ENCODE measurements at regions of chr7 and their contacts with region 1.

Region 1: DNA sequence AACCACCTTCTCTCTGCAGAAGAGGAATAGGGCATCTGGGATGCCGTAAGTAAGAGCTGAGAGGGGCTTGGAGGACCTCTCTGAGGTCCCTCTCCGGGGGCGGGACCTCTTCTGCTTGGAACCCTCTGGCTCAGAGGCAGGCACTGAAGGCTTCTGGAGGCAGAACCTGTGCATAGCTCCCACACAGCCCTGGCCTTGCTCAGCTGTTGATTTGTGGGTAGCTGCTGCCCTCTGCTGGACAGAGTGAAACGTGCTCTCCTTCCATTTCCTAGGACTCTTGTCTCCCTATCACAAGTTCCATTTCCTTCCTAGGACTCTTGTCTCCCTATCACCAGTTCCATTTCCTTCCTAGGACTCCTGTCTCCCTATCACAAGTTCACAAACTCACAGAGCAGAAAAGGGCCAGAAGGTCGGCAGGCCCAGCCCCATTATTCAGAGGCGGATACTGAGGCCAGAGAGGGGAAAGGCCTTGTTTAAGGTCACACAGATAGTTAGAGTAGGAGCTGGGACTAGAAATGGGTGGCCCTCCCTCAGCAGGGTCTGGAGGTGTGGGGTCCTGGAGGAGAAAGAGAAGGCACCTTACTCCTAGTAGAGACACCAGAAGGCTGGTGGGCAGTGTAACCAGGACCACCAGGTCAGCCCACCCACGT is 30.3 kb upstream of the GARS1 start:
- DNase-seq: peak; percentile 90
- H3K4me3 ChIP-seq: no peak overlapping the region
- H3K27ac ChIP-seq: no peak overlapping the region
- H3K4me1 ChIP-seq: no peaks in the 10 kb centered on the region
- H3K27me3 ChIP-seq: no peaks in the 10 kb centered on the region
- CTCF ChIP-seq: peak; percentile 84

Region 2: DNA sequence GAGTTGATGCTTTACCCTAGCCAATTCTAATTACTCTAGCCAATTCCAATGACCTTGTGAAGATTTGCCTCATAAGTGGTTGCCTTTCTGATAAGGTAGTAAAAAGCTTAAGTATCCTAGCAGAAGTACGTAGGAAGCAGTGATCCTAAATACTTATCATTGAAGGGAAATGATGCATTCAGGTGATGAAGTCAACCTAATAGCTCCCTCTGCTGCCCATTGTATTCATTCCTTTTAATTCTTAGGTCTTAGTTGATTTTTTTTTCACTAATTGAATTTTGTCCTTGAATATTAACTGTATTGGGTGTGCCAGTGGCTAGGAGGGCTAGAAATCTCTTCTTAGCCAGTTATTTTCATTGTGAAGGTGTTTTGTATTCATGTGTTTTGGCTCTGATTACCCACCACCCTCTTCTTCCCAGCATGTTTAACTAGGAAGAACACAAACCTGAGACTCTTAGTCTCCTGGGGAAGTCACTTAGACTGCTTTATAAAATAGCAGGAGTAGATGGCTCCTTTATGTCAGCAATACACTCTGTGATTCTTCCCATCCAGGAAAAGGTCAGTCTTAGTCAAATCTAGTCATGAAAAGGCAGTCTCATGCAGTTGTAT is 489.8 kb before region 1 on chr7:
- CTCF ChIA-PET with region 1: no interaction called
- POLR2A ChIA-PET with region 1: no interaction called
- intact Hi-C with region 1: loop called (anchors 5 kb)
- DNase-seq: peak; percentile 51
- H3K4me3 ChIP-seq: no peak overlapping the region
- H3K27ac ChIP-seq: no peak overlapping the region
- H3K4me1 ChIP-seq: no peaks in the 10 kb centered on the region
- H3K27me3 ChIP-seq: no peaks in the 10 kb centered on the region
- CTCF ChIP-seq: peak; percentile 63

Region 3: DNA sequence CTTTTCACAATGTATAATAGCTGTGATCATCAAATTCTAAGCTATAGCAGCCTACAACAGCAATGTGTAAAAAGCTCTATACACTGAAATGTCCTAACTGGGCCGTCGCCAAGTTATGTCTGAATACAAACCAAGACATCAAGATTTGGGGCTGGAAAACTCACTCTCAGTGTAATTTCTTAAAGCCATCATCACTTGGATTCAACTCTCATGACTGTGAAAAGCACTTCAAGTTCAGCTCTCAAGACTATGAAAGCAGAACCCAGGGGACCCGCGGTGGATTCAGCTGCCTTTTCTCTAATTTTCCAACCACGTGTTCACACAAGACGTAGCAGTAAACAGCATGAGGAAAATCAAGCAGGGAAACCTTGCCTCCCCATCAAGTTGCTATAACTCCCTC is 295.8 kb before region 1 on chr7:
- CTCF ChIA-PET with region 1: interaction called, 14 read pairs
- POLR2A ChIA-PET with region 1: no interaction called
- intact Hi-C with region 1: no loop called
- DNase-seq: no peak
- H3K4me3 ChIP-seq: no peak overlapping the region
- H3K27ac ChIP-seq: no peak overlapping the region
- H3K4me1 ChIP-seq: no peaks in the 10 kb centered on the region
- H3K27me3 ChIP-seq: no peaks in the 10 kb centered on the region
- CTCF ChIP-seq: no peak

Region 4: DNA sequence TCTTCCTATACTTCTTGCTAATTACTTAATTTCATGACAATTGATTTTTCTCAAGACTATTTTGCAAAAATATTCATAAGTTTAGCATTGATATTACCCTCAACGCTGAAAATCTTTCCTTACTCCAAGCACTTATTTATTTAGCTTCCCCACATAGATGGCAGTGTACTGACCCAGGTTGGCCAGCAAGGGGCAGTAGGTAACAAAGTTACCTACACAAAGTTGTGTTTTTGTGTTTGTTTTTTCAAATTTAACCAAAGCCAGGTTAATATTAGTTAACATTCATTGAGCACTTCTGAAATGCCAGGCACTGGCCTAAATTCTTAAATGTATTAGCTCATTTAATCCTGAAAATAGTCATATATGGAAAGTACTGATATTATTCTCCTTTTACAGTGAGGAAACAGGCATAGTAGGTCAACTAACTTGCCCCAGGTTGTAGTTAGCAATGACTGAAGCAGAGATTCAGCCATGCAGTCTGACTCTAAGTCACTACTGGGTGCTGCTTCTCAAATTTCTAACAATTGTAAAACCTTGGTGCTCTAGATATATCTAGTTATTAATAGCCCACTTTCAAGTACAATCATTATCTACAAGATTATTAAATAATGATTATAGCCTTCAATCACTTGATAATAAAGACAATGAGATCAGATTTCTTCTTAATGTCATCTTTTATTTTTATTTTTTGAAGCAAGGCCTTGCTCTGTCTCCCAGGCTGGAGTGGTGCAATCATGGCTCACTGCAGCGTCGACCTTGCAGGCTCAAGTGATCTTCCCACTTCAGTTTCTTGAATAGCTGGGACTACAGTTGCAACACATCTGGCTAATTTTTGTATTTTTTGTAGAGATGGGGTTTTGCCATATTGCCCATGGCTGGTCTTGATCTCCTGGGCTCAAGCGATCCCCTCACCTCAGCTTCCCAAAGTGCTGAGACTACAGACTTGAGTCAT is 54.0 kb before region 1 on chr7:
- CTCF ChIA-PET with region 1: interaction called, 5 read pairs
- POLR2A ChIA-PET with region 1: no interaction called
- intact Hi-C with region 1: loop called (anchors 1 kb)
- DNase-seq: peak; percentile 49
- H3K4me3 ChIP-seq: no peak overlapping the region
- H3K27ac ChIP-seq: no peak overlapping the region
- H3K4me1 ChIP-seq: no peaks in the 10 kb centered on the region
- H3K27me3 ChIP-seq: no peaks in the 10 kb centered on the region
- CTCF ChIP-seq: peak; percentile 88

Measured in A673 (cell line).